Caco-2 (cell line): ENCODE measurements at regions of chr1 and their contacts with region 1.

Region 1: GRCh38 chr1:223717695-223718363 is 5.5 kb downstream of the CAPN2 start:
- DNase-seq: no peak
- H3K4me3 ChIP-seq: no peak overlapping the region
- H3K4me3 Mint-ChIP-seq: no peak overlapping the region
- H3K27ac Mint-ChIP-seq: peak overlapping the region; percentile 86
- H3K4me1 ChIP-seq: peaks cover 84% of the 10 kb centered on the region
- H3K4me1 Mint-ChIP-seq: peaks cover 55% of the 10 kb centered on the region
- H3K27me3 ChIP-seq: no peaks in the 10 kb centered on the region
- H3K27me3 Mint-ChIP-seq: no peaks in the 10 kb centered on the region
- CTCF ChIP-seq: no peak

Region 2: DNA sequence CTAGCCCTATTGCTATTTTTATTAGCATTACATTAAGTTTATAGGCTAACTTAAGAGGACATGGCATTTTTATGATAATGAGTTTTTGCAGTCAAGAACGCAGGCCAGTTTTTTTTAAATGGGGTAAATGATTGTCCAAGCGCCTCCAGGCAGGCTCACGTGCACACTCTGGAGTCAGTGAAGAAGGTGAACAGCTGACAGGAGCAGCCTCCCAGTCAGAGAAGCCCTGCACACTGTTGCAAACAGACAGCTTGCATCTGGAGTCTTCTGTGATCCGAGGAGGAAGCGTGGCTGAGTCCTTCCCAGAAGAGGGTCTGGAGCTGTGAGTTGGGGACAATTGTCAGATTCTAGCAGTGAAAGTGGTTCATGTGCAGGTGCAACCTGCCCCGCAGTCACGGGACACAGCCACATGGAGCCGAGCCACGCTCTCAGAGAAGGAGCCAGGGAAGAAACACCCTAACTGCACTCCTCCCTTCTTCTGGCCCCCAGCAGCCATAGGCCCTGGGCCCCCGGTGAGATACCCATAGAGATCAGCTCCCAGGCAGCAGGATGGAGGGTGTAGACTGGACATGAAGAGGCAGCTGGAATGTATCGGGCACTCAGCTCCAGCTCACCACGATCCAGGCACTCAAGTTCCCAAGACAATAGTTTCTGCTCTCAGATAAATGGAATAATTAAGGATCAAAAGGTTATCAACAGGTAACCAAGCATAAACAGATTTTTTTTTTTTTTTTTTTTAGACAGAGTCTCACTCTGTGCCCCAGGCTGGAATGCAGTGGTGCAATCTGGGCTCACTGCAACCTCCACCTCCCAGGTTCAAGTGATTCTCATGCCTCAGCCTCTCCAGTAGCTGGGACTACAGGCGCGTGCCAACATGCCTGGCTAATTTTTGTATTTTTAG is 20.9 kb after region 1 on chr1:
- CTCF ChIA-PET with region 1: interaction called, 3 read pairs
- POLR2A ChIA-PET with region 1: interaction called, 7 read pairs
- intact Hi-C with region 1: loop called (anchors 1 kb)
- DNase-seq: peak; percentile 64 to 67
- H3K4me3 ChIP-seq: no peak overlapping the region
- H3K4me3 Mint-ChIP-seq: no peak overlapping the region
- H3K27ac Mint-ChIP-seq: peak overlapping the region; percentile 95
- H3K4me1 ChIP-seq: peaks cover 53% of the 10 kb centered on the region
- H3K4me1 Mint-ChIP-seq: peaks cover 30% of the 10 kb centered on the region
- H3K27me3 ChIP-seq: no peaks in the 10 kb centered on the region
- H3K27me3 Mint-ChIP-seq: no peaks in the 10 kb centered on the region
- CTCF ChIP-seq: no peak

Region 3: GRCh38 chr1:223748773-223749733 is 31.2 kb after region 1 on chr1:
- CTCF ChIA-PET with region 1: interaction called, 10 read pairs
- POLR2A ChIA-PET with region 1: no interaction called
- intact Hi-C with region 1: no loop called
- DNase-seq: peak in 1 of 2 experiments; percentile 63
- H3K4me3 ChIP-seq: no peak overlapping the region
- H3K4me3 Mint-ChIP-seq: no peak overlapping the region
- H3K27ac Mint-ChIP-seq: no peak overlapping the region
- H3K4me1 ChIP-seq: no peaks in the 10 kb centered on the region
- H3K4me1 Mint-ChIP-seq: peaks cover 23% of the 10 kb centered on the region
- H3K27me3 ChIP-seq: no peaks in the 10 kb centered on the region
- H3K27me3 Mint-ChIP-seq: no peaks in the 10 kb centered on the region
- CTCF ChIP-seq: peak; percentile 71 to 89

Region 4: GRCh38 chr1:223819730-223820514 is 102.1 kb after region 1 on chr1:
- CTCF ChIA-PET with region 1: no interaction called
- POLR2A ChIA-PET with region 1: no interaction called
- intact Hi-C with region 1: loop called (anchors 1 kb)
- DNase-seq: peak; percentile 50 to 71
- H3K4me3 ChIP-seq: no peak overlapping the region
- H3K4me3 Mint-ChIP-seq: peak overlapping the region; percentile 56
- H3K27ac Mint-ChIP-seq: peak overlapping the region; percentile 93
- H3K4me1 ChIP-seq: peaks cover 51% of the 10 kb centered on the region
- H3K4me1 Mint-ChIP-seq: peaks cover 52% of the 10 kb centered on the region
- H3K27me3 ChIP-seq: no peaks in the 10 kb centered on the region
- H3K27me3 Mint-ChIP-seq: no peaks in the 10 kb centered on the region
- CTCF ChIP-seq: no peak